ENCODE measurements at regions of chr12 and their contacts with region 1.

Region 1: DNA sequence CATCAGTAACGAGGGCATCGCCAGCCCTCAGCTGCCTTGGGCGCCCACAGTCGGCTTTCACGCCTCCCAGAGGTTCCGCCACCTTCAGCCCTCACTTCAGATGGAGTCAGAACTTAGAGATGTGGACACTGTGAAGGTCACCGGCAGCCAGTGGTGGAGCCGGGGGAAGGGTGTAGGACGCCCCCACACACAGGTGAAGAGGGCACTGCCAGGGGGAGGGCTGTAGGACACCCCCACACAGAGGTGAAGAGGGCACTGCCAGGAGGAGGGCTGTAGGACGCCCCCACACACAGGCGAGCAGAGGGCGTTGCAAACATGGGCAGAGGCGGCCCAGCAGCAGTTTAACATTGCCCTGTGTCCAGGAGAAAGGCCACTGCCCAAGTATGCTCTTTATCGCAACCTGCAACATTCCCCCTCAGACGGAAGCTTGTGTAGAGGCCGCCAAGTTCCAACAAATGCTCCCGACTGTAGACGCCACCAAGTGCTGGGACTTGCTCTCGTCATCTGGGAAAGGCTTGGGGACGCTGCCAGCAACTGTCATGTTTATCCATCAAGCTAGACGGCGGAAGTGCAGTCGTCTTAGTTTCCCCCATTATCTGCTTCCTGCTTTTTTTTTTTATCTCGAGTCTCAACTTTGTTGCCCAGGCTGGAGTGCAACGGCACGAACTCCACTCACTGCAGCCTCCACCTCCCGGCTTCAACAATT is 4.9 kb upstream of the ANKLE2 start:
- DNase-seq: peak in 2 of 10 donors; percentile 32 to 54
- H3K4me3 ChIP-seq: no peak overlapping the region
- H3K27ac ChIP-seq: peak overlapping the region in 27 of 59 donors; percentile 0 to 61 (median 42)
- H3K27me3 ChIP-seq: no peaks in the 10 kb centered on the region
- CTCF ChIP-seq: no peak

Region 2: DNA sequence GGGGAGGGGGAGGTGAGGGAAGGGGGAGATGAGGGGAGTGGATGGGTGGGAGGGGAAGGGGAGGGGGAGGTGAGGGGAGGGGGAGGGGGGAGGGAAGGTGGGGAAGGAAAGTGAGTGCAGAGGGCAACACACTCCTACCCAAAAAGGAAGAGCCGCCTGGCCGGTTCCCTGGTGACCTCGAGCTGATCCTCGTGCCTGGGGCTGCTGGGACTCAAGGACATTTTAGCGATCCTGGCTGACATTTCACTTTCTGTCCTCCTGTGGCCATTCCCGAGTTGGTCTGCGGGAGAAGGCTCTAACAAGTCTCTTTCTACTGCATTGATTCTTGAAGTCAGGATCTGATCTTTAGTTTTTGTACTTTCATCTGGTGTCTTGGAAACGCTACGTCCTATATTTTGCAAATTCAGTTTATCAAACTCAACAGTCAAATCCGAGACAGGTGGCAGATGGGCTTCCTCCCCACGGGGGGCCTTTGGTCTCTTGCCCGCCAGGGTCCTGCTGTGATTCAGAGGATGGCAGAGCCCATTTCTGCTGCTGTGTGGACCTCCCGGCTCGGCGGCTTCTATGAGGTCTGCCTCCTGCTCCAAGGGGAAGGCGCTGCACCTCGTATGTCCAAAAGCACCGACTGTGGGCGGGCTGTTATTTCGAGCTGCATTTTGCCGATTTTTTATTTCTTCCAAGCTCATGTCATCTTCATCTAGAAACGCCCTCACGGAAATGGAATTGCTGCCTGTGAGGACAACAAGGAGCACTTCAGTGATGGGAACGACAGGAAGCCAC is 36.8 kb before region 1 on chr12:
- intact Hi-C with region 1: no loop called
- DNase-seq: peak in 5 of 10 donors; percentile 33 to 66 (median 61)
- H3K4me3 ChIP-seq: peak overlapping the region in 6 of 59 donors; percentile 7 to 23 (median 12)
- H3K27ac ChIP-seq: peak overlapping the region in 24 of 59 donors; percentile 0 to 66 (median 41)
- H3K27me3 ChIP-seq: no peaks in the 10 kb centered on the region
- CTCF ChIP-seq: no peak

Region 3: DNA sequence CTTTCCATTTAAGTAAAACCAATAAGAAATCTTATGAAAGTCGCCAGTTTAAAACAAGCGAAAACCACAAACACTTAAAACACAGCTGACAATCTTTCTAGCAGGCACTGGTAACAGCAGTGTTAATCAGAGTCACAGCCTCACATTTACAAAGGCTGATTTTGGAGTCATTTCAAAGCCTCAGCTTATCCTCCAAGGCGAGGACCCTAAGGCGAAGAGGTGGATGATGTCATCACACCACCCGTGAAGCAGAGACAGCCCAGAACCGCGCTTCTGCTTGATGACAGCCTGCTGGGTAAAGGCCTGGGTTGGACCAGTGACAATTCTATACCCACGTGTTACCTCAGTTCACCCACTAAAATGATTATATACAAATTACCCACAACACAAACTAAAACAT is 52.0 kb after region 1 on chr12:
- intact Hi-C with region 1: no loop called
- DNase-seq: no peak
- H3K4me3 ChIP-seq: no peak overlapping the region
- H3K27ac ChIP-seq: no peak overlapping the region
- H3K27me3 ChIP-seq: no peaks in the 10 kb centered on the region
- CTCF ChIP-seq: no peak

Region 4: GRCh38 chr12:132828706-132829534 is 62.4 kb after region 1 on chr12 and contains the start of gene GOLGA3:
- intact Hi-C with region 1: loop called (anchors 5 kb)
- DNase-seq: peak; percentile 89 to 95 (median 92)
- H3K4me3 ChIP-seq: peak within 1 kb of the TSS; percentile 51 to 100 (median 91)
- H3K27ac ChIP-seq: peak within 1 kb of the TSS; percentile 64 to 100 (median 98)
- H3K27me3 ChIP-seq: no peaks in the 10 kb centered on the region
- CTCF ChIP-seq: peak in 13 of 56 donors; percentile 6 to 50 (median 26)
- total RNA-seq, gene GOLGA3: 46.0 to 96.5 (median 63.7) TPM